Activated naive CD4-positive, alpha-beta T cell treated with anti-CD3 and anti-CD28 coated beads, Interleukin-2, amount 10 ng/mL, durations not matched to agents 7 days and 5 days (primary cell): ENCODE measurements at regions of chr16 and their contacts with region 1.

Region 1: DNA sequence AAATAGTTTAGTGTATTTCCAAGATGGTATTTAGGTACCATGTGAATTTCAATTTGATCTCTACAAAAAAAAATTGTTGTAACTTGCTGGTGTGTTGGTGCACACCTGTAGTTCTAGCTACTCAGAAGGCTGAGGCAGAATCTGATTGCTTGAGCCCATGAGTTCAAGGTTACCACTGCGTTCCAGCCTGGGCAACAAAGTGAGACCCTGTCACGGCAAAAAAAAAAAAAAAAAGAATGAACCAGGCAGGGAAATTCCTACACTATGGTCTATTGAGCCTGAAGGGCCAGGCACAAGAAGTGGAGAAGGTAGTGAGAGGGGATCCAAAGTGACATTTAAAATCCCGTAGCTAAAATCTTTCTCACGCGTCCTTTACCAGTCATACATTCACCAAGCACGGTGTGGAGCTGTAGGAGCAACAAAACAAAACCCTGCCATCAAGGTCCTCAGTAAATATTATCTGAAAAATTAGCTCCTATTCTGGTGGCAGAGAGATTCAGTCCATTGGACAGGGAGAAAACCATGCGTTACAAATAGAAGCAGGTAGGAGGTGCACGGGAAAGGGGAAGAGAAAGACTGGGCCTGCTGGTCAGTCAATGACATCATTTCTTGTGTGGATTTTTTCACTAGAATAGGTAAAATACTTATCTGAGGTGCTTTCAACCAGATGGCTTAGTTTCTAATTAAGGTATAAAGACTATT is 27.3 kb downstream of the TXNDC11 start:
- DNase-seq: no peak
- H3K4me3 Mint-ChIP-seq: no peak overlapping the region
- H3K27ac Mint-ChIP-seq: no peak overlapping the region
- H3K4me1 Mint-ChIP-seq: peaks cover 5% of the 10 kb centered on the region
- H3K27me3 Mint-ChIP-seq: no peaks in the 10 kb centered on the region

Region 2: DNA sequence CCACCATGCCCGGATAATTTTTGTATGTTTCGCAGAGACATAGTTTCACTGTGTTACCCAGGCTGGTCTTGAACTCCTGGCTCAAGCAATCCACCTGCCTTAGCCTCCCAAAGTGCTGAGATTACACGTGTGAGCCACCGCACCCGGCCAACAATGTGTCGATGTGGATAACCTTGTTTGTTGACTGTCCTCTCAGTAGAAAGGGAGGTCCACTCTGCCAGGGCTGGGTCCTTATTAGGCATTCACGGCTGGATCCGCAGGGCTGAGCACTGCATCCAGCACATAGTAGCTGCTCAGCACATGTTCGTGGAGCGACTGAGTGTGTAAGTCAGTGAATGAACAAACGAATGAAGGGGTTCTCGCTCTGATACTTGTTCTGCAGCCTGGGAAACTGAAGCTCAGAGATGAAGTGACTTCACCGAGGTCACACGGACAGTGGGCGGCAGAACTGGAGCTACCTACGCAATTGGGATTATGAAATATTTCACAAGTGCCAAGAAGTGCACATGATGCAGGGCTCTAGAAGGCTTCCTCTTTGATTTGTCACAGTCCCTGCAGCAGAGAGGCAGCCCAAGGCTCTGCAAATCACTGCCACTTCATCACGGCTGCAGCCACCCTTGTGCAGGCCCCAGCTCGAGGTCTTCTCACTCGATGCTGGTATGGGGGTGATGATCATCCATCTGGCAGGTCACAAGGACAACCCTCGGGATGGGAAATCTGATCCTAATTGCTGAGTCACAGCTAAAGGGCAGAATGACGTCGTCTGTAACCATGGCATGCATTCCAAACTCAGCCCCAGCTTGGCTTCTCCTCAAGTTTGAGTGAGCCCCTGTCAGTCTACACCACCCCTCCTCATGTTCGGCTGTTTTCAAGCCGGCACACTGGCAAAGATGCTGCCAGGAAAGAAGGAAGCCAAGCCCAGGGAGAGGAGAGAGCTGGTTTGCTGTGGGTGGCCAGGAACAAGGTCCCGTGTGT is 75.2 kb before region 1 on chr16:
- CTCF ChIA-PET with region 1: interaction called, 22 read pairs
- DNase-seq: no peak
- H3K4me3 Mint-ChIP-seq: no peak overlapping the region
- H3K27ac Mint-ChIP-seq: no peak overlapping the region
- H3K4me1 Mint-ChIP-seq: peaks cover 20% of the 10 kb centered on the region
- H3K27me3 Mint-ChIP-seq: peaks cover 43% of the 10 kb centered on the region

Region 3: DNA sequence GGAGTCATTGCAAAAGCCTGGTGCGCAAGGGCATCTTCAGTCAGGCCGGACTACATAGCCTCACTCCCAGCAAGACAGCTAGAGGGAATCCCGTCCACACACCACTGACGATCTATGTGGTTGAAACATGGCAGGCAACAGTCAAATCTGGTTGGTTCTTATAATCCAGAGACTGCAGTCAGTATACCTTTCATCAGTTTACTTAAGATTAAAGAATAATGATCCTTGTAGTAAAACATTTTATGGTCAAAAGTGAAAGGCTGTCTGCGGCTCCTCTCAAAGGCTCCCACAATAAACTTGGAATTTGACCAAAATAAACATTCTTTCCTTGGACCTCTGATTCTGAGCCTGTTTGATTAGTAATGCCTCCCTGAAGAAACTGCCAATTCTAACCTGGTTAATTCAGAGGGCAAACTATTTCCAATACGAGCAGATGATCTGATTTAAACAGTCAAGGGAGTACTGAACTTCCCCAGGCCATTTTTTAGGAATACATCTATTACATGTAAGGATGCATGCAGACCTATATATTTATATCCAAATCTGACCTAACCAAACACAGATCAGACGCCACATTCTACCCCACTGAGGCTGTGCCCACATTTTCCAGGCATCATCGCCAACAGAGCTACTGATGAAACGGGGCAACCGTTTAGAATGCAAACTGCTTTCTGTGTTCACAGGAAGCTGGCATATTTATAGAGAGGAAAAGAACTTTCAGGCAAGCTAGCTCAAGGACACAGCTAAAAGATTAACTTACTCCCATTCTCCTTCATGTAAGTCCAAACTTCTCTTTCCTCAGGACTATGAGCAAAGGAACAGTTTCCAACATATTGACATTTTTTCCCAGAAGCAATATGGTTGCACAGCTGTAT is 42.5 kb after region 1 on chr16:
- CTCF ChIA-PET with region 1: no interaction called
- DNase-seq: no peak
- H3K4me3 Mint-ChIP-seq: no peak overlapping the region
- H3K27ac Mint-ChIP-seq: no peak overlapping the region
- H3K4me1 Mint-ChIP-seq: no peaks in the 10 kb centered on the region
- H3K27me3 Mint-ChIP-seq: no peaks in the 10 kb centered on the region